ENCODE measurements at regions of chr4 and their contacts with region 1.

Region 1: GRCh38 chr4:173257732-173258717 is 76.1 kb downstream of the HMGB2 start:
- DNase-seq: no peak
- H3K4me3 ChIP-seq: no peak overlapping the region
- H3K27ac ChIP-seq: no peak overlapping the region
- H3K4me1 ChIP-seq: peaks cover 0 to 31% (median 0%) of the 10 kb centered on the region in 6 donors
- H3K27me3 ChIP-seq: no peaks in the 10 kb centered on the region
- CTCF ChIP-seq: peak; percentile 48 to 82 (median 70)
- POLR2A ChIP-seq: no peak

Region 2: DNA sequence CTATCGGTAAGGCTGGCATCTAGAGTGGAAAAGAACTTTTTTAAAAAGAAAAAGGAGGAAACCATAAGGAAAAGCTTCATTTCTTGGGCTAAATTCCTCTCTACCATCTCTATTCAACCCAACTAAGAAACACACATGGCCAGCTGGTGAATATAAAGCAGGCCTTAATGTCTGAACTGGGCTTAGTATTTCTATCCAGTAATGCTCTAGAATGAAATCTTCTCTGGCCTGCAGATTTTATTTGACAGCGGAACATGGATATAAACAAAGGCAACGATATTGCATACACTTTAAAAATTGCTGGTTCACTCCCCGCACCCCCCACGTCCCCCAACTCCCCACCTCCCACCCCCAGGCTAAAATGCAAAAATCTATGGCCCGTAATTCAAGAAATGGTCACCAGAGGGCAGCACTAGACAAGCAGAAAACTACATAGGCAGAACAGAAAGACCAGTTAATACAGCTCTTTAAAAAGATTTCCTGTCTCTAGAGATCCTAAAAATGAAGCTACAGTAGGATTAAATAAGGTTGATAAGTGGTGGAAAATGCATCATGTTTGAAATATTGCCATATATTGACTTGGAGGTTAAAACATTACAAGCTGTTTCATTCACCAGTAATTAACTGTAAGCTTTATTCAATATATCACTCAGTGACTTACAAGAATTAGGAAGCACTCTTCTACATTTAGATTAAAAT is 244.6 kb before region 1 on chr4:
- intact Hi-C with region 1: loop called (anchors 5 kb)
- DNase-seq: no peak
- H3K4me3 ChIP-seq: no peak overlapping the region
- H3K27ac ChIP-seq: no peak overlapping the region
- H3K4me1 ChIP-seq: peaks cover 0 to 5% (median 0%) of the 10 kb centered on the region in 6 donors
- H3K27me3 ChIP-seq: no peaks in the 10 kb centered on the region
- CTCF ChIP-seq: peak; percentile 34 to 86 (median 70)
- POLR2A ChIP-seq: no peak

Region 3: GRCh38 chr4:173025131-173025530 is 232.9 kb before region 1 on chr4:
- intact Hi-C with region 1: loop called (anchors 5 kb)
- DNase-seq: no peak
- H3K4me3 ChIP-seq: no peak overlapping the region
- H3K27ac ChIP-seq: no peak overlapping the region
- H3K4me1 ChIP-seq: no peaks in the 10 kb centered on the region
- H3K27me3 ChIP-seq: no peaks in the 10 kb centered on the region
- CTCF ChIP-seq: peak in 9 of 11 experiments; percentile 27 to 71 (median 53)
- POLR2A ChIP-seq: no peak

Region 4: DNA sequence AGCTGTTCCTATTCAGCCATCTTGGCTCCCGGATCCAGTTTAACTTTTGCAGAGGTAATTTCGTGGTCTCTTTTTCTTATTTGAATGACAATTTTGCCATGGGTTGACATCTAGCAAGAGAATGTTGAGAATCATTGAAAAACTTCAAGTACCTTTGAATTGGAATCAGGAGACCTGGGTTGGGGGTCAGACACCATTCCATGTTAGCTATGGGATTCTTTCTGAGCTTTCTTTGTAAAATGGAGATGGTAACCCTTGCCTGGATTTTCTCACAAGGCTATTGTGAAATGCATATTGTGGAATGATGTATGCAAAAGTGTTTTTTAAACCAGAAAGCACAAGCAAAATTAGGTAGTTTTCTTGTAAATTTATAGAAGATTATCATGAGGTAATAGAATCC is 351.1 kb after region 1 on chr4:
- intact Hi-C with region 1: no loop called
- DNase-seq: no peak
- H3K4me3 ChIP-seq: no peak overlapping the region
- H3K27ac ChIP-seq: no peak overlapping the region
- H3K4me1 ChIP-seq: no peaks in the 10 kb centered on the region
- H3K27me3 ChIP-seq: peaks cover 0 to 8% (median 0%) of the 10 kb centered on the region in 7 donors
- CTCF ChIP-seq: no peak
- POLR2A ChIP-seq: no peak

Measured in spleen (tissue), 13 donors.